ENCODE measurements at regions of chr7 and their contacts with region 1.

Region 1: DNA sequence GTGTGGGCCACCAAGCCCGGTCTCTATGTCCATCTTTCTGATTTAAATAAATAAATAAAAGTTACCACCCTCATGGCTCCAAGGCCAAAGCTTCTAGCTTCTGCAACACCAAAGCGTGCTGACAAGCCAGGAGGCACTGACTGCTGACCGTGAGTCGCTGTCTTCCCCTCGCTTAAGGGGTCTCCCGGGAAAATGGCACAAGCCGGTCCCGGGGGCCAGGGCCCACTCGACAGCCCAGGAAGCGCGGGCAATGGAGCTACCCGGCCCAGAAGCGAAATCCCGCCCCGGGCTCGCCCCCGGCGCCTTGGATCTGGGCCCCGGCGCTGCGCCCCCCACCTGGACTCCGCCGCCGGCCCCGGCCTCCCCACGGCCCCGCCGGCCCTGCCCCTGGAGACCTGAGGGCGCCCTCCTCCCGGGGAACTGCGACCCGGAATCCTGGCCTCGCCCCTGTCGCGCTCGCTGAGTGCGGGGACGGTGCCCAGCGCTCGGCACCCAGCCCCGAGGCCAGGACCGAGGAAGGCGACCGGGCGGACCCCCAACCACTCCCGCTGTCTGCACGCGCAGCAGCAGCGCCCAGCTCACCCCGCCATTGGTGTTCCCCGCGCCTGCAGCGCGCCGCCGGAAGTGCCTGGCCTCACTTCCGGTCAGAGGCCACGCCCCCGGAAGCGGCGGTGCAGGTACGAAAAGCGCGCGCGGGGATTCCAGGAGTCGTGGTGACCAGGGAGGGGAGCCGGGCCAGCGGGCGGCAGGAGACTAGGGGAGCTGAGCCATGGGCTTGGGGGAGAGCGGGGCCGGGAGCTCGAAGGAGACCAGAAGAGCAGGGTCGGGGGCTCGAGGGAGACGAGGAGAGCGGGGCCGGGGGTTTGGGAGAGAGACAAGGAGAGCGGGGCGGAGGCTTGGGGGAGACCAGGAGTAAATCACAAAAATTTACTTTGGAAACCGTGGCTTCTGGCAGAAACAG is at the starts of genes MRM2 and NUDT1:
- DNase-seq: peak; percentile 90
- H3K4me3 ChIP-seq: peak within 1 kb of the TSS; percentile 92 to 93 (median 92)
- H3K27ac ChIP-seq: peak within 1 kb of the TSS; percentile 58 to 79 (median 76)
- H3K4me1 ChIP-seq: peaks cover 0 to 21% (median 20%) of the 10 kb centered on the region in 4 donors
- H3K27me3 ChIP-seq: no peaks in the 10 kb centered on the region
- CTCF ChIP-seq: no peak
- EP300 ChIP-seq: no peak
- POLR2A ChIP-seq: peak; percentile 18 to 38
- total RNA-seq, gene MRM2: 13.2 to 20.8 (median 17.3) TPM
- total RNA-seq, gene NUDT1: 13.3 to 31.7 (median 26.9) TPM

Region 2: DNA sequence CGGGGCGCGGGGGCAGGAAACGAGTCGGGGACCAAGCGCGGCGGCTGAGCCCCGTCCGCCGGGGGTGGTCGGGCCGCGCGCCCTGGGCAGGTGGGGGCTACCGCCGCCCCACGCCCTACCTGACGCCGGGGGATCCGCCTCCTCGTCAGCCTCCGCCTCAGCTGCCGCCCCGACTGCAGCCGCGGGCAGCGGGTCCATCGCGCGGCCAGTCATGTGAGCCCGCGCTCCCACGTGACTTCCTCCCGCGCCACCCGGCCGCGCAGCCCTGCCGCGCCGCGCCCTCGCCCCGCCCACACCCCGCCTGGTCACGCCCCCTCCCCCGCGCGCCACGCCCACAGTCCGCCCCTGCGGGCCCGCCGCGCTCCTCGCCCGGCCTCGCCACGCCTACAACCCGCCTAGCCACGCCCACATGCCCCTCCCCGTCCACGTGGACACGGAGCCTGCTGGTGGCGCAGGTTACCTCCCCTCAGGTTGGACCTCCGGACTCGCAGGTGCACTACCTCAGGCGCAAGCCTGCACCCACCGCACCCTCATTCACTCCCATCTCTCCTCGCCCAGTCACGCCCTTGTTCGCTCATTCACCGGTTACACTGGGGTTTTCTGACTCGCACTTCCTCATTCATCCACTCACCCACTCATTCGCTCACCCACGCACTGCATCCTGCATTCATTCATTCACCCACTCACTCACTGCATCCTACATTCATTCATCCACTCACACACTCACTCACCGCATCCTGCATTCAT is 72.5 kb after region 1 on chr7 and contains the start of gene SNX8:
- intact Hi-C with region 1: loop called (anchors 5 kb)
- DNase-seq: peak; percentile 93
- H3K4me3 ChIP-seq: peak within 1 kb of the TSS; percentile 69 to 97 (median 89)
- H3K27ac ChIP-seq: peak within 1 kb of the TSS; percentile 72 to 78 (median 77)
- H3K4me1 ChIP-seq: peaks cover 0 to 12% (median 8%) of the 10 kb centered on the region in 4 donors
- H3K27me3 ChIP-seq: no peaks in the 10 kb centered on the region
- CTCF ChIP-seq: no peak
- EP300 ChIP-seq: no peak
- POLR2A ChIP-seq: no peak
- total RNA-seq, gene SNX8: 5.3 to 14.0 (median 8.5) TPM